ENCODE measurements at regions of chr4 and their contacts with region 1.

Region 1: DNA sequence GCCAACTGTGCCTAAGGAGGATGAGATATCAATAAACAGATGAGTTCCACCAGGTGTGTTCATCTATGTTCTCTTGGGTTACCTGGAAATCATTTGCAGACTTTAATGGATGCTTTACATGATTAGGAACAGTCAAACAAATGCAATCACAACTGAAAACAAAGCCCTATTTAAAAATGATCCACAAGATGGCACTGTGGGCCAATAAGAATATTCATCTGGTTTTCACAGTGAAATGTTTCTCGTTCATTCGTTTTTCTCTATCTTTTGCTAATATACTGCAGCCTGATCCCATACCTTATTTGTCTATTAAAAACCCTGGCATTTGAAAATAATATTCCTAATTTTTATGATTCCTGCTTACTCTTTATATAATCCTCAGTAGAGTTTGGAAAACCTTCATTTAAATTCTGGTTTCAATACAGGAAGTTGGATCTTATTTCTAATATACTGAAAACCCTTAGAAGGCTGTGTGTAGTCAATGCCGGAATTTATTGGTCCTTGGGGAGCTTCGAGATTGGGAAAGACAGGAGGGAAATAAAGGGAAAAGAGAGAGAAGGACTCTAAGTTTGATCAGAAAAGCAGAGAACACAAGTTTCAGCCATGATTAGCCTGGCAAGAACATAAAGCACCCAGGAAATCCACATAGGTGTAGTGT is 63.8 kb upstream of the TAPT1 start:
- DNase-seq: peak in 3 of 4 experiments; percentile 12 to 34 (median 34)
- ATAC-seq: peak; percentile 65; the same call in 2 of the 3 replicates
- H3K4me3 ChIP-seq: no peak overlapping the region
- H3K27ac ChIP-seq: no peak overlapping the region
- H3K4me1 ChIP-seq: no peaks in the 10 kb centered on the region
- H3K27me3 ChIP-seq: no peaks in the 10 kb centered on the region
- CTCF ChIP-seq: peak; percentile 45 to 71 (median 47); a peak in 4 of 6 replicates
- EP300 ChIP-seq: no peak
- POLR2A ChIP-seq: no peak
- RAD21 ChIP-seq: peak; percentile 61 to 74

Region 2: GRCh38 chr4:16443504-16444088 is 153.6 kb after region 1 on chr4:
- CTCF ChIA-PET with region 1: interaction called, 4 read pairs
- POLR2A ChIA-PET with region 1: no interaction called
- in situ Hi-C with region 1: no loop called
- intact Hi-C with region 1: loop called (anchors 1 kb)
- DNase-seq: peak; percentile 33 to 54 (median 37)
- ATAC-seq: peak; percentile 83
- H3K4me3 ChIP-seq: no peak overlapping the region
- H3K27ac ChIP-seq: no peak overlapping the region
- H3K4me1 ChIP-seq: no peaks in the 10 kb centered on the region
- H3K27me3 ChIP-seq: no peaks in the 10 kb centered on the region
- CTCF ChIP-seq: peak; percentile 35 to 65 (median 62); a peak in 5 of 6 replicates
- EP300 ChIP-seq: no peak
- POLR2A ChIP-seq: no peak
- RAD21 ChIP-seq: peak in 1 of 2 experiments; percentile 51; a peak in 3 of 4 replicates

Region 3: GRCh38 chr4:16450724-16451123 is 160.7 kb after region 1 on chr4:
- CTCF ChIA-PET with region 1: no interaction called
- POLR2A ChIA-PET with region 1: no interaction called
- in situ Hi-C with region 1: loop called (anchors 10 kb)
- intact Hi-C with region 1: no loop called
- DNase-seq: no peak
- ATAC-seq: no peak
- H3K4me3 ChIP-seq: no peak overlapping the region
- H3K27ac ChIP-seq: no peak overlapping the region
- H3K4me1 ChIP-seq: no peaks in the 10 kb centered on the region
- H3K27me3 ChIP-seq: no peaks in the 10 kb centered on the region
- CTCF ChIP-seq: no peak
- EP300 ChIP-seq: no peak
- POLR2A ChIP-seq: no peak
- RAD21 ChIP-seq: no peak

Region 4: DNA sequence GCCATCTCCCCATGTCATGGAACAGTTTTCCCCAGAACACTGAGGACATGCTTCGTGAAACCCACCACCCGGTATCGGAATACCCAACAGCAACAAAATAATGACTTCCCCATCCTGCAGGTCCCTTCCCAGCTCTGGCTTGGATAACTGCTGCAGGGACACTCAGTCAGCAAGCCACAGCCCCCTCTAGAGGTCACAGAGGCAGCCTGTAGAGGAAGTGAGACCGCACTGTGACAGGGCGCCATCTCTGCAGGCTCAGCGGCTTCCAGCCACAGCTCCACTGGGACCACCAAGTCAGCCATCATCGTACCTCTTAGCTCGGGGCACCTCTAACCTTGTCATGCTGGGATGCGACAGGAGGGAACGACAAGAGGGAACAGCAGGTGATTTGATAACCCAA is 292.5 kb after region 1 on chr4:
- CTCF ChIA-PET with region 1: no interaction called
- POLR2A ChIA-PET with region 1: no interaction called
- in situ Hi-C with region 1: no loop called
- intact Hi-C with region 1: loop called (anchors 1 kb)
- DNase-seq: peak; percentile 17 to 47 (median 34)
- ATAC-seq: peak; percentile 98
- H3K4me3 ChIP-seq: no peak overlapping the region
- H3K27ac ChIP-seq: no peak overlapping the region
- H3K4me1 ChIP-seq: no peaks in the 10 kb centered on the region
- H3K27me3 ChIP-seq: no peaks in the 10 kb centered on the region; a peak in 1 of 5 replicates
- CTCF ChIP-seq: peak; percentile 59 to 73 (median 71)
- EP300 ChIP-seq: no peak
- POLR2A ChIP-seq: no peak
- RAD21 ChIP-seq: peak in 1 of 2 experiments; percentile 36; a peak in 2 of 4 replicates

Region 5: GRCh38 chr4:17324386-17324830 is 1034.4 kb after region 1 on chr4:
- CTCF ChIA-PET with region 1: interaction called, 3 read pairs
- POLR2A ChIA-PET with region 1: no interaction called
- in situ Hi-C with region 1: loop called (anchors 25 kb)
- intact Hi-C with region 1: loop called (anchors 5 kb)
- DNase-seq: peak; percentile 58 to 67 (median 64)
- ATAC-seq: peak; percentile 75
- H3K4me3 ChIP-seq: no peak overlapping the region
- H3K27ac ChIP-seq: no peak overlapping the region
- H3K4me1 ChIP-seq: no peaks in the 10 kb centered on the region
- H3K27me3 ChIP-seq: no peaks in the 10 kb centered on the region
- CTCF ChIP-seq: peak; percentile 63 to 83 (median 65)
- EP300 ChIP-seq: no peak
- POLR2A ChIP-seq: no peak
- RAD21 ChIP-seq: peak; percentile 77

Region 6: GRCh38 chr4:17347445-17347844 is 1057.4 kb after region 1 on chr4:
- CTCF ChIA-PET with region 1: no interaction called
- POLR2A ChIA-PET with region 1: no interaction called
- in situ Hi-C with region 1: loop called (anchors 25 kb)
- intact Hi-C with region 1: no loop called
- DNase-seq: peak; percentile 15 to 46 (median 30)
- ATAC-seq: peak; percentile 77
- H3K4me3 ChIP-seq: no peak overlapping the region
- H3K27ac ChIP-seq: no peak overlapping the region
- H3K4me1 ChIP-seq: no peaks in the 10 kb centered on the region
- H3K27me3 ChIP-seq: no peaks in the 10 kb centered on the region
- CTCF ChIP-seq: peak; percentile 55 to 71 (median 67)
- EP300 ChIP-seq: no peak
- POLR2A ChIP-seq: no peak
- RAD21 ChIP-seq: peak; percentile 48 to 68

Region 7: GRCh38 chr4:17447675-17448298 is 1157.8 kb after region 1 on chr4:
- CTCF ChIA-PET with region 1: no interaction called
- POLR2A ChIA-PET with region 1: no interaction called
- in situ Hi-C with region 1: loop called (anchors 10 kb)
- intact Hi-C with region 1: no loop called
- DNase-seq: peak; percentile 31 to 74 (median 46)
- ATAC-seq: peak; percentile 99
- H3K4me3 ChIP-seq: no peak overlapping the region
- H3K27ac ChIP-seq: no peak overlapping the region
- H3K4me1 ChIP-seq: no peaks in the 10 kb centered on the region
- H3K27me3 ChIP-seq: no peaks in the 10 kb centered on the region
- CTCF ChIP-seq: peak; percentile 66 to 85 (median 72); a peak in 5 of 6 replicates
- EP300 ChIP-seq: no peak
- POLR2A ChIP-seq: no peak
- RAD21 ChIP-seq: peak; percentile 66 to 79

Measured in K562 (cell line).